ENCODE measurements at regions of chr11 and their contacts with region 1.

Region 1: DNA sequence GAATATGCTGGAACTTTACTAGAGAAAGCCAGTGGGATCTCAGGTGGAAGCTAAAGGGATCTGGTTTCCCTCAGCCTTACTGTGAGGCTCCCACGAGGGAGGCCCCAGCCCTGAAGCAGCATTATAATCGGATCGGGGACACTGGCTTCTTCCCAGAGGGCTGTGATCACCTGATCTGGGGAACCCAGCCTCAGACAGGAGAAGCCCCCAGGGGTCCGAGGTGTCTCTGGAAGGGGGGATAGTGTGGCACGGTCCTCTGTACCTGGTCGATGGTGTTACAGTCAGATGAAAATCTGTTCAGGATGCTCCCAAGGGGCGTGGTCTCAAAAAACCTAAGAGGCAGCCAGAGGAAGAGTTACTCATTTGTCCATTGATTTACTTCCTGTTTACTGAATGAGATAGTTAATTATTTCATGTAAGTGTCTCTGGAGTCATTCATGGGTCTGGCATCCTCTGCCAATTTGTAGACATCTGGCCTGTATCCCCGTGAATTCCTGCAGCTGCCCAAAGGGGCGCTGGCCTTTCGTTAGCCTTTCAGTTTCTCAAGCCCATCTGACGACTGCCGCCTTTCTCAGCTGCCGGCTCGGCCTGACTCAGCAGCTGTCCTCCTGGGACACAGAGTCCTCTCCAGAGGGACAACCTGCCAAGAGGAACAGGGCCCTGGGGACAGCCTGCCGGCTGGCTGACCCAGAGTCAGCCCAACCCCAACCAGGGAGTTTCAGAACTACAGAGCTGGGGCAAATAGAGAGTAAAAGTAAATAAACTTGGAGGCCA is 17.0 kb upstream of the KCNJ11 start:
- DNase-seq: peak; percentile 93 to 97
- ATAC-seq: peak; percentile 73 to 77
- H3K4me3 ChIP-seq: peak overlapping the region; percentile 9 to 27 (median 22)
- H3K27ac ChIP-seq: peak overlapping the region; percentile 85 to 96 (median 92)
- H3K4me1 ChIP-seq: peaks cover 51 to 57% of the 10 kb centered on the region in 2 donors
- H3K27me3 ChIP-seq: no peaks in the 10 kb centered on the region
- CTCF ChIP-seq: peak in 4 of 5 experiments; percentile 30 to 52 (median 42)
- POLR2A ChIP-seq: peak; percentile 49 to 52

Region 2: GRCh38 chr11:17389211-17389956 is 16.0 kb before region 1 on chr11:
- in situ Hi-C with region 1: no loop called
- intact Hi-C with region 1: loop called (anchors 1 kb)
- DNase-seq: peak; percentile 81 to 94
- ATAC-seq: peak; percentile 35 to 45
- H3K4me3 ChIP-seq: peak overlapping the region; percentile 68 to 81 (median 76)
- H3K27ac ChIP-seq: peak overlapping the region; percentile 90 to 98 (median 97)
- H3K4me1 ChIP-seq: peaks cover 12 to 29% of the 10 kb centered on the region in 2 donors
- H3K27me3 ChIP-seq: no peaks in the 10 kb centered on the region
- CTCF ChIP-seq: peak; percentile 39 to 85 (median 69)
- POLR2A ChIP-seq: peak in 1 of 2 donors; percentile 21

Region 3: DNA sequence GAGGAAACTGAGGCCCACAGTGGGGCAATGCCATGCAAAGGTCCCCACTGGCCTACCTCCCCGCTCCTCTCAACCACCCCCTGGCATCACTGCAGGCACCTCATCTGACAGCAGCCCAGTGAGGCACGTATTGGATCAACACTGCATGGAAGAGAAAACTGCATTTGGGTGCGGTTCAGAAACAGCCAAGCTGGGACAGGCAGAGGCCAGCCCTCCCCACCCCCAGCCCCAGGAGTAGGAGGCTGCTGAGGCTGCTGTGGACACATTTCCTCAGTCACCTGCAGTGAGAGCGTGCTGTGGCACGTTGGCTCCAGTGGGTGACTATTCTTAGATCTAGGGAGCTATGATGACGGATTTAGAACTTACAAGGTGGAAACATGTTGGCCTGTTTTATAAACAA is 392.8 kb after region 1 on chr11:
- in situ Hi-C with region 1: no loop called
- intact Hi-C with region 1: loop called (anchors 5 kb)
- DNase-seq: peak; percentile 90 to 95
- ATAC-seq: peak; percentile 90 to 91
- H3K4me3 ChIP-seq: peak overlapping the region in 2 of 4 donors; percentile 12 to 35
- H3K27ac ChIP-seq: peak overlapping the region; percentile 90 to 96 (median 94)
- H3K4me1 ChIP-seq: peaks cover 50 to 52% of the 10 kb centered on the region in 2 donors
- H3K27me3 ChIP-seq: no peaks in the 10 kb centered on the region
- CTCF ChIP-seq: no peak
- POLR2A ChIP-seq: peak in 1 of 2 donors; percentile 35

Region 4: DNA sequence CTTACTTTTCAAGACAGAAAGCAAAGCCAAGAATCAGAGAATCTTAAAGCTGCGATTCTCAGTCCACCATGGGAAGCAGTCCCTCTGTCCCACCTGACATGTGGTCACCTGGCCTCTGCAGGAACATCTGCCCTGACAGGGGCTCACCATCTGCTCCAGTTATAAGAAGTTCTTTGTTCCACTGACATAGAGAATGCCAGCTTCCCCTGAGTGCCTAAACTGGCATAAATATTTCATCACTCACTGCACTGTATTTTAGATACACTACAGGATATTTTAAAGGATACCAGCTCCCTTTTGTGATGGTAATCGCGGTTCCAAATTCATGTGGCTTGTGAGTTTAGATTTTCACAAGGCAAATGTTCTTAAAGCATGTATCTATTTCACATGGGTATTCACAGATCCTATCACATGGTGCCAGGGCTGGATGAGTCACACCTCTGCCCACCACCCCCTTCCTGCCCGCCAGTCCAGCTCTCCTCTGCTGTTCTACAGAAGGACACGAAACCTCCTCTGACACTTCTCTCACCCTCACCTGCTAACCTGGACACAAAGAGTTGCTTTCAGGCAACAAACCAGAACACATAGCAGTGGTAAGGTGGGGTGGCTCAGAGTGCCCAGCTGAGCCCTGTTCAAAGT is 434.7 kb after region 1 on chr11:
- in situ Hi-C with region 1: loop called in 1 of 4 experiments (anchors 25 kb)
- intact Hi-C with region 1: loop called (anchors 5 kb)
- DNase-seq: peak; percentile 70 to 84
- ATAC-seq: peak; percentile 52 to 55
- H3K4me3 ChIP-seq: no peak overlapping the region
- H3K27ac ChIP-seq: peak overlapping the region; percentile 91 to 97 (median 92)
- H3K4me1 ChIP-seq: peaks cover 36 to 46% of the 10 kb centered on the region in 2 donors
- H3K27me3 ChIP-seq: no peaks in the 10 kb centered on the region
- CTCF ChIP-seq: no peak
- POLR2A ChIP-seq: peak; percentile 19 to 52

Region 5: DNA sequence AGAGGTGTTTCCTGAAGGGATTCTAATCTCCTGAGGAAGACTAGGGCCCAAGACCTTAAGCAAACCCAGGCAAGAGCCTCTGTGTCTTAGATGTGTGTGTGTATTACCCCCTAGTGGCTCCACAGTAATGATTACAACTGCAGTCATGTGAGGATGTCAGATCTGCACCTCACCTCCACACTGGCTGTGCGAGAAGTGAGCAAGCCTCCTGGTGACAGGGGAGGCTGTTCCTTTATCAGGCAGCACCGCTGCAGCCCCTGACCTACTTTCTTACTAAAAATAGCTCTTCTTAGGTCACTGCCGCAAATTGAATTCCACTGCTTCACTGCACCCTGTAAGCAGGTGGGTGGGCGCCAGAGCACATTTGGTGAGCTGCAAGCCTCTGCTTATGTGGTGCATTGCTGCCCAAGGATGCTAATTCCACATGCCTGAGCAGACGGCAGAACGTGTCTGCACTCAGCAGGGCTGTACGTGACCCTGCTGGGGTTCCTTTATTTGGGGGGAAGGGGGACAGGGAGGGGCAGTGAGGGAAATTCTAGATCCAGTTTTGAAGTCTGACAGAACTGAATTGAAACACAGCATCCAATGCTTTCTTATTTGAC is 441.5 kb after region 1 on chr11:
- in situ Hi-C with region 1: loop called in 1 of 4 experiments (anchors 25 kb)
- intact Hi-C with region 1: loop called (anchors 5 kb)
- DNase-seq: peak; percentile 42 to 73
- ATAC-seq: peak; percentile 86 to 88
- H3K4me3 ChIP-seq: no peak overlapping the region
- H3K27ac ChIP-seq: peak overlapping the region; percentile 44 to 62 (median 51)
- H3K4me1 ChIP-seq: peaks cover 29 to 38% of the 10 kb centered on the region in 2 donors
- H3K27me3 ChIP-seq: no peaks in the 10 kb centered on the region
- CTCF ChIP-seq: peak; percentile 40 to 68 (median 61)
- POLR2A ChIP-seq: peak in 1 of 2 donors; percentile 30